ENCODE measurements at regions of chr7 and their contacts with region 1.

Region 1: DNA sequence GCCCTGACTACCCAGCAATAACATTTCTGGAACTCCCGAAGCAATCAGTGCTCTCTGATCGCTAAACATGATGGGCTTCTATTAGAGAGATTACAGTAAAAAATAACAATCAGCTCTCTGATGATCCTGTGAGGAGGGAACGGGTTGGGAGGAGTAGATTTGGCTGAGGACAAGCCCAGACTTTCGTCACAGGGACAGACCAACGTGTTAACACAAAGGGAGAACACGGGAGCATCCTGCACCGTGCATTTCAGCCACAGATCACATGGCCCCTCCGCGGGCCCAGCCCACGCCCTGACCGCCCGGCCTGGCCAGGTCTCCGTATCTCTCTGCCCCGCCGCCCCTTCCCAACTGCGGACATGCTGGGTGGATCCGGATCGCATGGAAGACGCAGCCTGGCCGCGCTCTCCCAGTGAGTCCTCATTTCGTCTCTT is 95.0 kb upstream of the AGBL3 start:
- DNase-seq: peak; percentile 92

Region 2: GRCh38 chr7:134827889-134828288 is 63.4 kb before region 1 on chr7:
- intact Hi-C with region 1: loop called (anchors 1 kb)
- DNase-seq: no peak

Region 3: GRCh38 chr7:134932707-134933370 is 41.6 kb after region 1 on chr7:
- intact Hi-C with region 1: loop called (anchors 2 kb)
- DNase-seq: no peak

Region 4: DNA sequence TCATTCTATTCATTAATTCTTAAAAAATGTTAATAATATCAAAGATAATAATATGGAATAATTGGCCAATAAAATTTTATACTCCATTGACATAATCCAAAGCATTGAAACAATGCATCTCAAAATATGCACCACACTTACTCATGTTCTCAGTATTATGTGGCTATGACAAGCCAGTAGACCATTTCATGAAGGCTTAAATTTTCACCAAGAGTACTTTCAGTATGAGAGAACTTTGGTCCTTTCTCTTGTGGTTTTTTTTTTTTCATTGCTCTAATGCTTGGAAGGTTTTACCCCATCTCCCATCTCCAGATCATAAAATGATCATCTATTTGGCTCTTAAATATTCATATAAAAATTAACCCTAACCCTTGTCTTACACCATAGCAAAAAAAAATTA is 211.1 kb after region 1 on chr7:
- intact Hi-C with region 1: no loop called
- DNase-seq: no peak

Measured in cardiac septum (tissue), 1 donor.